ENCODE measurements at regions of chr2 and their contacts with region 1.

Region 1: GRCh38 chr2:171703574-171704347 is 16.5 kb downstream of the DYNC1I2 start:
- DNase-seq: peak in 1 of 2 experiments; percentile 26
- H3K4me3 ChIP-seq: no peak overlapping the region
- H3K4me3 Mint-ChIP-seq: no peak overlapping the region
- H3K27ac Mint-ChIP-seq: no peak overlapping the region
- H3K4me1 ChIP-seq: no peaks in the 10 kb centered on the region; the same call in 1 of the 2 replicates
- H3K4me1 Mint-ChIP-seq: no peaks in the 10 kb centered on the region
- H3K27me3 ChIP-seq: no peaks in the 10 kb centered on the region
- H3K27me3 Mint-ChIP-seq: no peaks in the 10 kb centered on the region
- CTCF ChIP-seq: peak; percentile 38 to 46

Region 2: GRCh38 chr2:171574149-171574795 is 129.5 kb before region 1 on chr2:
- CTCF ChIA-PET with region 1: interaction called, 3 read pairs
- POLR2A ChIA-PET with region 1: no interaction called
- intact Hi-C with region 1: loop called (anchors 1 kb)
- DNase-seq: peak; percentile 71 to 87
- H3K4me3 ChIP-seq: no peak overlapping the region
- H3K4me3 Mint-ChIP-seq: no peak overlapping the region
- H3K27ac Mint-ChIP-seq: no peak overlapping the region
- H3K4me1 ChIP-seq: no peaks in the 10 kb centered on the region
- H3K4me1 Mint-ChIP-seq: no peaks in the 10 kb centered on the region
- H3K27me3 ChIP-seq: no peaks in the 10 kb centered on the region; the same call in 1 of the 2 replicates
- H3K27me3 Mint-ChIP-seq: no peaks in the 10 kb centered on the region
- CTCF ChIP-seq: peak; percentile 90 to 96

Region 3: GRCh38 chr2:171598713-171599319 is 104.9 kb before region 1 on chr2:
- CTCF ChIA-PET with region 1: no interaction called
- POLR2A ChIA-PET with region 1: no interaction called
- intact Hi-C with region 1: loop called (anchors 2 kb)
- DNase-seq: peak; percentile 60 to 68
- H3K4me3 ChIP-seq: no peak overlapping the region
- H3K4me3 Mint-ChIP-seq: no peak overlapping the region
- H3K27ac Mint-ChIP-seq: no peak overlapping the region
- H3K4me1 ChIP-seq: no peaks in the 10 kb centered on the region
- H3K4me1 Mint-ChIP-seq: peaks cover 6% of the 10 kb centered on the region
- H3K27me3 ChIP-seq: no peaks in the 10 kb centered on the region
- H3K27me3 Mint-ChIP-seq: peaks cover 10% of the 10 kb centered on the region
- CTCF ChIP-seq: peak; percentile 80 to 85

Region 4: GRCh38 chr2:171787333-171788072 is 83.7 kb after region 1 on chr2:
- CTCF ChIA-PET with region 1: no interaction called
- POLR2A ChIA-PET with region 1: no interaction called
- intact Hi-C with region 1: loop called (anchors 5 kb)
- DNase-seq: peak; percentile 40
- H3K4me3 ChIP-seq: no peak overlapping the region
- H3K4me3 Mint-ChIP-seq: peak overlapping the region; percentile 53
- H3K27ac Mint-ChIP-seq: peak overlapping the region; percentile 66
- H3K4me1 ChIP-seq: no peaks in the 10 kb centered on the region
- H3K4me1 Mint-ChIP-seq: peaks cover 9% of the 10 kb centered on the region
- H3K27me3 ChIP-seq: no peaks in the 10 kb centered on the region
- H3K27me3 Mint-ChIP-seq: no peaks in the 10 kb centered on the region
- CTCF ChIP-seq: no peak

Region 5: DNA sequence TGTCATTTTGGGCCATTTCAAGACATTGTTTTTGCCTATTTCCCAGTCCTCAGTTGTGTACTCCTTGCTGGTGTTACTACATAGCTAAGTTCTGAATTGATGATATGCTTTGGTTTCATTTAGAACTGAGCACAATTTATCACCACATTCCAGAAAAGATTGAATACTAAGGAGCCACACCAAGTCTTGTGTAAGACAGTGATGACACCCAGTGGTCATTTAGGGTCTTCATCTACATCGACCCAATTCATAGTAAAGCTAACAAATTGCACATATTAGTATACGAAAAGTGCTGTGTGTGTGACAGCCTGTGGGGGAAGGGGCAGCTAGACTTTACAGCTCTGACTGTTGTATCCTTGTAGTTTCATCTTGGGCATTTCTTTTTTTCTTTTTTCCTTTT is 409.9 kb after region 1 on chr2:
- CTCF ChIA-PET with region 1: interaction called, 5 read pairs
- POLR2A ChIA-PET with region 1: no interaction called
- intact Hi-C with region 1: loop called (anchors 1 kb)
- DNase-seq: no peak
- H3K4me3 ChIP-seq: no peak overlapping the region
- H3K4me3 Mint-ChIP-seq: no peak overlapping the region
- H3K27ac Mint-ChIP-seq: no peak overlapping the region
- H3K4me1 ChIP-seq: peaks cover 10% of the 10 kb centered on the region
- H3K4me1 Mint-ChIP-seq: peaks cover 9% of the 10 kb centered on the region
- H3K27me3 ChIP-seq: no peaks in the 10 kb centered on the region
- H3K27me3 Mint-ChIP-seq: no peaks in the 10 kb centered on the region
- CTCF ChIP-seq: peak; percentile 20 to 30